Ascending aorta (tissue), 2 donors: ENCODE measurements at regions of chr10 and their contacts with region 1.

Region 1: DNA sequence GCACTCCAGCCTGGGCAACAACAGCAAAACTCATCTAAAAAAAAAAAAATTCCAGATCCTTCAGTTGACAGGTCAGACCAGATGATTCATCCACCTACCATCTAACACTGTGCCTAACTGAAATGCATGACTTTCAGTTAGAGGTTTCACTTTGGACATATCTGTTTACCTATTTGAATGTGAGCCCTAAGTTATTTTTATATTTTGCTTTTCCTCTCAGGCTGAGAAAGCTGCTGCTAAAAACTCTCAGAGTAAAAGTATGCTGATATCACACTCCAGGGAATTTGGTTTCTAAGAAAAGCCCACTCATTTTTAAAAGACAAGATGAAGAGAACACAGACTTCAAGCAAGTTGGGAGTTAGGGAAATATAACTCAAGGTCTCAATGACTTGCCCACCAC is 126.0 kb downstream of the SGMS1 start:
- DNase-seq: no peak
- H3K4me3 ChIP-seq: peak overlapping the region in 1 of 2 donors; percentile 28
- H3K27ac ChIP-seq: peak overlapping the region; percentile 68 to 78
- H3K4me1 ChIP-seq: peaks cover 0 to 11% of the 10 kb centered on the region in 2 donors
- H3K27me3 ChIP-seq: no peaks in the 10 kb centered on the region
- CTCF ChIP-seq: no peak

Region 2: GRCh38 chr10:50325449-50326171 is 172.1 kb before region 1 on chr10:
- intact Hi-C with region 1: loop called (anchors 10 kb)
- DNase-seq: peak; percentile 50 to 91
- H3K4me3 ChIP-seq: peak overlapping the region in 1 of 2 donors; percentile 39
- H3K27ac ChIP-seq: peak overlapping the region; percentile 73 to 76
- H3K4me1 ChIP-seq: peaks cover 4 to 37% of the 10 kb centered on the region in 2 donors
- H3K27me3 ChIP-seq: no peaks in the 10 kb centered on the region
- CTCF ChIP-seq: no peak

Region 3: GRCh38 chr10:50347394-50347802 is 150.4 kb before region 1 on chr10:
- intact Hi-C with region 1: no loop called
- DNase-seq: no peak
- H3K4me3 ChIP-seq: no peak overlapping the region
- H3K27ac ChIP-seq: no peak overlapping the region
- H3K4me1 ChIP-seq: no peaks in the 10 kb centered on the region
- H3K27me3 ChIP-seq: no peaks in the 10 kb centered on the region
- CTCF ChIP-seq: no peak

Region 4: DNA sequence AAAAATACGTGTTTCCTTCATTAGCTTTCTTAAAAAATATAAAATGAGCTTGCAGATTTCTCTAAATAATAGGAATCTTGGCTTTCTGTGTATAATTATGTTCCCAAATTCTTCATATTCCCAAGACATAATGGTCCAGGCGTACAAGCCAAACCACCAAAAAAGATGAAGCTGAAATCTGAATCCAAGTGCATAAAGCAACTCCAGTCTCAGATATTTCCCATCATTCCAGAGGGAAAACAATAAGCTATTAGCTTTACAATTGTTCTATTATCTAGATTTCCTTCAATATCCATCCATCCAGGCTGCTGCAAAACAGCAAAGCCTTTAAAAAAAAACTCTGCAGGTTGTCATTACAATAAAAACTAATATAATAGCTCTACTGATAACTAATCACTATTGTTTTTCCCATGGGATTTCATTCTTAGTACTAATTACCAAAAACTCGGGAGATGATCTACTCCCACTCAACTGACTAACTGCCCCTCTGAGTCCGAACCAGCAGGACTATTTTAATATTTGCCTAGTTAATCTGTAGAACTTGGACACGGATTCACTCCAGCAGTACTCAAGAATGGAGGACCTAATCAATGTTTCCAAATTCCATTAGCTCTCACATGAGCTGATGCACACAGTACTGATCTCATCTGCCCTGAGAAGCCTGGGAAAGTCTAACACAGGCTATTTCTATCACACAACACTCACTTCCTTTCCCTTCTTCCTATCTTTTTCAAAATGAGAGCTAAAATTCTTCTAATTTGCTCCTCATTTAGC is 137.5 kb before region 1 on chr10:
- intact Hi-C with region 1: no loop called
- DNase-seq: no peak
- H3K4me3 ChIP-seq: no peak overlapping the region
- H3K27ac ChIP-seq: peak overlapping the region in 1 of 2 donors; percentile 2
- H3K4me1 ChIP-seq: peaks cover 0 to 10% of the 10 kb centered on the region in 2 donors
- H3K27me3 ChIP-seq: no peaks in the 10 kb centered on the region
- CTCF ChIP-seq: no peak

Region 5: GRCh38 chr10:50431791-50432190 is 66.0 kb before region 1 on chr10:
- intact Hi-C with region 1: loop called (anchors 5 kb)
- DNase-seq: peak in 1 of 2 donors; percentile 65
- H3K4me3 ChIP-seq: peak overlapping the region; percentile 29 to 43
- H3K27ac ChIP-seq: peak overlapping the region; percentile 77 to 83
- H3K4me1 ChIP-seq: peaks cover 0 to 9% of the 10 kb centered on the region in 2 donors
- H3K27me3 ChIP-seq: no peaks in the 10 kb centered on the region
- CTCF ChIP-seq: no peak

Region 6: GRCh38 chr10:50552771-50553535 is 55.2 kb after region 1 on chr10:
- intact Hi-C with region 1: loop called (anchors 5 kb)
- DNase-seq: no peak
- H3K4me3 ChIP-seq: no peak overlapping the region
- H3K27ac ChIP-seq: peak overlapping the region; percentile 69 to 72
- H3K4me1 ChIP-seq: peaks cover 14 to 55% of the 10 kb centered on the region in 2 donors
- H3K27me3 ChIP-seq: no peaks in the 10 kb centered on the region
- CTCF ChIP-seq: peak in 1 of 3 experiments; percentile 30

Region 7: DNA sequence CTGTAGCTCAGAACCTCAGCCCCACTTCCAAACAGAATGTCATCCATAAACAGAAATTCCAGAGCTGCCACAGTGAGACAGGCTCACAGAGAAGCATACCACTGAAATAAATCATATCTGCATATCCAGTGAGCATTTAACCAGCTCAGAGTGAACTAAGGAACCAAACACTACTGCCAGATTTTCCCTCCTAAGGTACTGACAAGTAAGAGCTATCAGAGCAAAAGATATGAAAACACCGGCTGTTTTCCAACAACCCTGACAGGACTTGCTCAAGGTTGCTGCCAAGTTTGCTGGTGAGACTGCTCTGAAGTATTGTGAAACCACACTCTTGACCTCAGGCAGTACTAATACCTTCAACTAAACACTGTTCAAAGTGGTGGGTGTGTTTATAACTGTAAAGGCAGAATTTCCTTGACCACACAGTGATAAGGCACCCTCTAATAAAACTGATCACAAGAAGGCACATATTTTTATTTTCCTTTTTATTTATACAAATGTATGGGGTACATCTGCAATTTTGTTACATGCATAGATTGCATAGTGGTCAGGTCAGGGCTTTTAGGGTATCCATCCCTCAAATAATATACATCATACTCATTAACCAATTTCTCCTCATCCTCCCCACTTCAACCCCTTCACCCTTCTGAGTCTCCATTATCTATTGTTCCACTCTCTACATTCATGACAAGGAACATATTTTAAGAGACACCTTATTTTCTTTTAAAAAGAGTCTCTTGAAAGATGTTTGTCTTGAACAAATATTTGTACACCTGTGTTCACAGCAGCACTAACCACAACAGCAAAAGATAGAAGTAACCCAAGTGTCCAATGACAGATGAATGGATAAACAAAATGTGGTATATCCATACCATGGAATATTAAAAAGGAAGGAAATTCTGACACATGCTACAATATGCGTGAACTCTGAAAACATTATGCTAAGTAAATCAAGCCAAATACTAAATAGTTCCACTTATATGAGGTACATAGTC is 107.8 kb after region 1 on chr10:
- intact Hi-C with region 1: loop called (anchors 5 kb)
- DNase-seq: peak in 1 of 2 donors; percentile 74
- H3K4me3 ChIP-seq: no peak overlapping the region
- H3K27ac ChIP-seq: peak overlapping the region; percentile 52 to 57
- H3K4me1 ChIP-seq: peaks cover 6 to 44% of the 10 kb centered on the region in 2 donors
- H3K27me3 ChIP-seq: no peaks in the 10 kb centered on the region
- CTCF ChIP-seq: no peak